Common myeloid progenitor, CD34-positive (primary cell): ENCODE measurements at regions of chr17 and their contacts with region 1.

Region 1: GRCh38 chr17:10683853-10684252 is 13.5 kb downstream of the SCO1 start:
- DNase-seq: peak; percentile 57 to 70 (median 67)
- H3K4me3 ChIP-seq: no peak overlapping the region
- H3K27ac ChIP-seq: no peak overlapping the region
- H3K4me1 ChIP-seq: no peaks in the 10 kb centered on the region
- H3K27me3 ChIP-seq: no peaks in the 10 kb centered on the region

Region 2: DNA sequence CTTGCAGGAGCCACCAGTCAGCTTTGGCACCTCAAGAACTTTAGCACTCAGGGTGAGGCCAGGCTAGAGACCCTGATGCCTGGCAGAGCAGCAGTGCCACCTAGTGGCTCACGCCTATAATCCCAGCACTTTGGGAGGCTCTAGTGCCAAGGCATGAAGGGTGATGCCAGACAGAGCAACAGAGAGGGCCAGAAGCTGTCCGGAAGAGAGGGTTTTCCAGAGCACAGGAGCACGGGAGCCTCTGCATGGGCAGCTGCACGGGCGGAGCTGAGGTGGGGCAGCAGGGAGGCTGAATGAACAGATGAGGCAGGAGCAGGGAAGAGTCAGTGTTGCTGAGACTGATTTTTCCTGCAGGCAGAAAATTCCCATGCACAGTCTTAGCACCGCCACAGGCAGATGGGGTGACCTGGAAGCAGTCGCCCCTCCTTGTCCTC is 65.6 kb before region 1 on chr17:
- CTCF ChIA-PET with region 1: no interaction called
- POLR2A ChIA-PET with region 1: no interaction called
- DNase-seq: peak; percentile 57 to 84 (median 81)
- H3K4me3 ChIP-seq: no peak overlapping the region
- H3K27ac ChIP-seq: no peak overlapping the region
- H3K4me1 ChIP-seq: peaks cover 0 to 6% (median 0%) of the 10 kb centered on the region in 4 experiments
- H3K27me3 ChIP-seq: no peaks in the 10 kb centered on the region

Region 3: GRCh38 chr17:10652984-10653659 is 30.7 kb before region 1 on chr17:
- CTCF ChIA-PET with region 1: interaction called, 69 read pairs
- POLR2A ChIA-PET with region 1: no interaction called
- DNase-seq: peak; percentile 83 to 94 (median 94)
- H3K4me3 ChIP-seq: peak overlapping the region in 4 of 7 experiments; percentile 7 to 54 (median 43)
- H3K27ac ChIP-seq: peak overlapping the region in 1 of 2 experiments; percentile 51
- H3K4me1 ChIP-seq: peaks cover 2 to 15% (median 13%) of the 10 kb centered on the region in 4 experiments
- H3K27me3 ChIP-seq: no peaks in the 10 kb centered on the region

Region 4: DNA sequence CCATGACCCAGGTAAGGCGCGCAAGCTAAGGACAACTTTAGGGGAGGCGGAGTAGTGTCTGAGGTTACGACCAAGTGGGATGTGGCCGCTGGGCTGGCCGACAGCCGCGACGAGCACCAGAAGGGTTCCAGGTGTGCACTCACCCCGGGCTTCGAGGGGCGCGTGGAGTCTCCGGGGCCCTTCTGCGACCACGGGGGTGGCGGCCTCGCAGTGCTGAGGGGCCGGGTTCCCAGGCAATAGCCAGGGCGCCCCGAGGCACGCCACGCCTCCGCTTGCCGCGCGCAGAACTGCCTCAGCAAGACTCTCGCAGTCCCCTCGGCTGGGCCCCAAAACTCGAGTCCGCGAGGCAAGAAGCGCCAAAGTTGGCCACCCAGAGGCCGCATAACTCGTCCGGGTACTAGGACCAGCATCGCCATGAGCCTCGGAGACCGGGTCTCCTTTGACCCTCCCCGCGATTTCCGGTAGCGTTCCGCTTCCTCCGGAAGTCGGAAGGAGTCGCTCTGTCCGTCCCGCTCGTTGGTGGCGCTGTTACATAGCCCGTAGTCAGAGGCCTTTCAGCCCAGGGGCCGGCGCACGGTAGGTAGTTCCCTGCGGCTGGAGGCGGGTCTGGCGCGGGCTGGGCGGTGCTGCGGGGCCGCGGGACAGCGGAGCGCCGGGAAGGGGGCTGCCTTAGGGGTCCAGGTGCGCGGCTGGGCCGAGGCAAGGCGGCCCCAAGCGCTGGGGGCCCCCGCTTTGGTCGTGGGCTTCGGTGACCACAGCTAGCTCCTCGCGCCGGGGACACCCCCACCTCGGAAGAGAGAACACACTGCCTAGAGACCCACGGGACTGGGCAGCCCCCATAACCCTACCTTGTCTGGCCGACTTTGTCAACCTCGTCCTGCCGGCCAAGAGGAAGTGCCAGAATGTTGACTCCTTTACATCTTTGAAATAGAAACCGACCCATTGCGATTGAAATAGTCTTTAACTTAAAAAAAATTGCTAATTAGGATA is 13.5 kb after region 1 on chr17 and contains the starts of genes ADPRM and SCO1:
- CTCF ChIA-PET with region 1: interaction called, 31 read pairs
- POLR2A ChIA-PET with region 1: no interaction called
- DNase-seq: peak; percentile 92 to 95 (median 94)
- H3K4me3 ChIP-seq: peak within 1 kb of the TSS; percentile 86 to 100 (median 93)
- H3K27ac ChIP-seq: peak within 1 kb of the TSS; percentile 91 to 95
- H3K4me1 ChIP-seq: peaks cover 20 to 51% (median 43%) of the 10 kb centered on the region in 4 experiments
- H3K27me3 ChIP-seq: no peaks in the 10 kb centered on the region

Region 5: DNA sequence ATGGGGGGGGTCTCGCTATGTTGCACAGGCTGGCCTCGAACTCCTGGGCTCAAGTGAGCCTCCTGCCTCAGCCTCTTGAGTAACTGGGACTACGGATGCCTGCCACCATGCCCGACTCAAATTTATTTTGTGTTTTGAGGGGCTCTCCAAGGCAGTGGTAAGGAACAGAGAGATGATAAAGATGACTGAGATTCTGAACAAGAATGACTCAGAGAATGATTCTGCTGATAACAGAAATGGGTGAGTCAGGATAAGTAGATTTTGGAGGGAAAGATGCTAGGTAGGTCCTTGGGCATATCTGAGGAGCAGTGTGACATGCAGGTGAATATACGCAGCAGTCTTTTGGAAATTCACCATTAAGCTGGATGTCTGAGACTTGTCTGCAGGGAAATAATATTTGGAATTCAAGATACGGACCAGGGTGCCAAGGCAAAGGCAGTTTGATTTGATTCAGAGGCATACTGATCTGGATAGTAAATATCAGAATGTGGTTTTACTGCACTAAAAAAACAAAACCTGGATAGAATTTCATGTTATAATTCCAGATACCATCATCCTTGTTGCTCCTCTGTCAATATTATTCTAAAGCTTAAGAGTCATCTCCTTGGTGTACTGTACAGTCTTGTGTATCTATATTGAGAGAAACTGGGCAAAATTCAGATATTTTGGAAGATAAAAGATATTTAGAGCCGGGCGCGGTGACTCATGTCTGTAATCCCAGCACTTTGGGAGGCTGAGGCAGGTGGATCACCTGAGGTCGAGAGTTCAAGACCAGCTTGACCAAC is 43.5 kb after region 1 on chr17:
- CTCF ChIA-PET with region 1: no interaction called
- POLR2A ChIA-PET with region 1: no interaction called
- DNase-seq: no peak
- H3K4me3 ChIP-seq: no peak overlapping the region
- H3K27ac ChIP-seq: no peak overlapping the region
- H3K4me1 ChIP-seq: peaks cover 0 to 17% (median 6%) of the 10 kb centered on the region in 4 experiments
- H3K27me3 ChIP-seq: no peaks in the 10 kb centered on the region